CD8-positive, alpha-beta T cell (primary cell): ENCODE measurements at regions of chr18 and their contacts with region 1.

Region 1: GRCh38 chr18:45212181-45213039 is 402.9 kb upstream of the SLC14A2 start:
- DNase-seq: peak; percentile 34 to 85 (median 68)
- ATAC-seq: peak; percentile 71
- H3K4me3 ChIP-seq: no peak overlapping the region
- H3K4me3 Mint-ChIP-seq: no peak overlapping the region
- H3K27ac ChIP-seq: no peak overlapping the region
- H3K27ac Mint-ChIP-seq: no peak overlapping the region
- H3K4me1 ChIP-seq: no peaks in the 10 kb centered on the region
- H3K4me1 Mint-ChIP-seq: no peaks in the 10 kb centered on the region
- H3K27me3 ChIP-seq: no peaks in the 10 kb centered on the region
- H3K27me3 Mint-ChIP-seq: peaks cover 2% of the 10 kb centered on the region
- CTCF ChIP-seq: peak; percentile 73

Region 2: GRCh38 chr18:43571078-43571689 is 1641.2 kb before region 1 on chr18:
- CTCF ChIA-PET with region 1: no interaction called
- POLR2A ChIA-PET with region 1: no interaction called
- intact Hi-C with region 1: loop called in 1 of 2 experiments (anchors 5 kb)
- DNase-seq: peak in 2 of 9 experiments; percentile 14 to 17
- ATAC-seq: no peak
- H3K4me3 ChIP-seq: no peak overlapping the region
- H3K4me3 Mint-ChIP-seq: no peak overlapping the region
- H3K27ac ChIP-seq: no peak overlapping the region
- H3K27ac Mint-ChIP-seq: no peak overlapping the region
- H3K4me1 ChIP-seq: no peaks in the 10 kb centered on the region
- H3K4me1 Mint-ChIP-seq: no peaks in the 10 kb centered on the region
- H3K27me3 ChIP-seq: no peaks in the 10 kb centered on the region
- H3K27me3 Mint-ChIP-seq: no peaks in the 10 kb centered on the region
- CTCF ChIP-seq: peak; percentile 27

Region 3: DNA sequence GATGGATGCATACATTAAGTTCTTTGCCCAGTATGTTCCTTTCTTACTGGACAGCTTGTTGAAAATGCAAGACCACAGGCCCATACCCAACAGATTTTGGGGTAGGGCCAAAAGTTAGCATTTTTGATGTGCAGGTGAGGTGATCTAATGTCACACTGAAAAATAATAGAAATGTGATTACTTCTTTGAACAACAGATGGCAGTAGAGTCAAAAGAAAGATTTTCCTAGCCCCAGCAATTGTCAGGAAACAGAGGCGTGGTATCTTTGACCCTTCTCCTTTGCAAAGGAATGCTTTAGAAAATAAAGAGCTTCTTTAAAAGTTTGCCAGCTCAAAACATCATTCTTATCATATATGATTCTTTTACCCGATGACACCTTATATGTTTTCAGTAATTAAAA is 1591.5 kb before region 1 on chr18:
- CTCF ChIA-PET with region 1: interaction called, 4 read pairs
- POLR2A ChIA-PET with region 1: no interaction called
- intact Hi-C with region 1: loop called (anchors 2 kb)
- DNase-seq: peak in 2 of 9 experiments; percentile 4 to 14
- ATAC-seq: no peak
- H3K4me3 ChIP-seq: no peak overlapping the region
- H3K4me3 Mint-ChIP-seq: no peak overlapping the region
- H3K27ac ChIP-seq: no peak overlapping the region
- H3K27ac Mint-ChIP-seq: no peak overlapping the region
- H3K4me1 ChIP-seq: no peaks in the 10 kb centered on the region
- H3K4me1 Mint-ChIP-seq: no peaks in the 10 kb centered on the region
- H3K27me3 ChIP-seq: no peaks in the 10 kb centered on the region
- H3K27me3 Mint-ChIP-seq: no peaks in the 10 kb centered on the region
- CTCF ChIP-seq: peak; percentile 29

Region 4: DNA sequence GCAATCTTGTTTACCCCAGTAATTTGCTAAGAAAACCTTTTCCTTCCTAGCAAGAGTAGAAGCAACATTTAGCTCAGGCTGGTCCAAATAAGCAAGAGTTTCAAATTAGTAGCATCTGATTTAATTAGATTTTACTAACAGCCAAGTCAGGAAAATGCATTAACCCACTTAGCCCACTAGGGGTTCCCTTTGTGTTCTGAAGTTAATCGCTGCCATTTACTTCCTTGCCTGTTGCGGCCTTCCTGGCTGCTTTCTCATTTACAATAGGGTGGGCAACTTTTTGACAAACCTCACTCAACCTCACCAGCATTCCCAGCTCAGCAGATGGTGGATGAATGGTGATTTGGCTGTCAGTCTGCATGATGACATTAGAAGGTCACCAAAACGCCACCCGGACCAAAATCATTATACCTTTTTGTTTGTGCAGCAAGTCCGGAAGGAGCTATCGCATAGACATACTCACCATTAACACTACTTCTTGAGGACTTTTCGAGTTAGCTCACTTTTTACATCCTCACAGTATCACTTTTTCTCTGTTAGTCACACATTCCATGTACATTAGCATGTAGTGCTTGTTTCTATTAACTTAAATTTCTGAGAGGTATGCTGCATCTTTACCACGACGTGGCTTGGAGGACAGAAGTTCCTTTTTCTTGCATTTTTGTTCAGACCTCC is 633.2 kb before region 1 on chr18:
- CTCF ChIA-PET with region 1: no interaction called
- POLR2A ChIA-PET with region 1: no interaction called
- intact Hi-C with region 1: loop called in 1 of 2 experiments (anchors 10 kb)
- DNase-seq: peak in 2 of 9 experiments; percentile 15 to 34
- ATAC-seq: no peak
- H3K4me3 ChIP-seq: no peak overlapping the region
- H3K4me3 Mint-ChIP-seq: no peak overlapping the region
- H3K27ac ChIP-seq: no peak overlapping the region
- H3K27ac Mint-ChIP-seq: no peak overlapping the region
- H3K4me1 ChIP-seq: no peaks in the 10 kb centered on the region
- H3K4me1 Mint-ChIP-seq: peaks cover 11% of the 10 kb centered on the region
- H3K27me3 ChIP-seq: no peaks in the 10 kb centered on the region
- H3K27me3 Mint-ChIP-seq: no peaks in the 10 kb centered on the region
- CTCF ChIP-seq: peak; percentile 19

Region 5: GRCh38 chr18:44679056-44679905 is 533.1 kb before region 1 on chr18:
- CTCF ChIA-PET with region 1: no interaction called
- POLR2A ChIA-PET with region 1: no interaction called
- intact Hi-C with region 1: loop called in 1 of 2 experiments (anchors 2 kb)
- DNase-seq: peak; percentile 18 to 88 (median 65)
- ATAC-seq: peak; percentile 88
- H3K4me3 ChIP-seq: peak overlapping the region; percentile 54 to 67
- H3K4me3 Mint-ChIP-seq: peak overlapping the region; percentile 85
- H3K27ac ChIP-seq: peak overlapping the region; percentile 44 to 67
- H3K27ac Mint-ChIP-seq: no peak overlapping the region
- H3K4me1 ChIP-seq: peaks cover 4% of the 10 kb centered on the region
- H3K4me1 Mint-ChIP-seq: peaks cover 7% of the 10 kb centered on the region
- H3K27me3 ChIP-seq: no peaks in the 10 kb centered on the region
- H3K27me3 Mint-ChIP-seq: peaks cover 15% of the 10 kb centered on the region
- CTCF ChIP-seq: peak; percentile 50

Region 6: GRCh38 chr18:44803019-44803650 is 409.3 kb before region 1 on chr18:
- CTCF ChIA-PET with region 1: no interaction called
- POLR2A ChIA-PET with region 1: no interaction called
- intact Hi-C with region 1: loop called in 1 of 2 experiments (anchors 10 kb)
- DNase-seq: no peak
- ATAC-seq: no peak
- H3K4me3 ChIP-seq: no peak overlapping the region
- H3K4me3 Mint-ChIP-seq: no peak overlapping the region
- H3K27ac ChIP-seq: no peak overlapping the region
- H3K27ac Mint-ChIP-seq: no peak overlapping the region
- H3K4me1 ChIP-seq: peaks cover 6% of the 10 kb centered on the region
- H3K4me1 Mint-ChIP-seq: peaks cover 8% of the 10 kb centered on the region
- H3K27me3 ChIP-seq: no peaks in the 10 kb centered on the region
- H3K27me3 Mint-ChIP-seq: no peaks in the 10 kb centered on the region
- CTCF ChIP-seq: no peak

Region 7: GRCh38 chr18:45191795-45192194 is 20.6 kb before region 1 on chr18:
- CTCF ChIA-PET with region 1: no interaction called
- POLR2A ChIA-PET with region 1: no interaction called
- intact Hi-C with region 1: no loop called
- DNase-seq: no peak
- ATAC-seq: no peak
- H3K4me3 ChIP-seq: no peak overlapping the region
- H3K4me3 Mint-ChIP-seq: no peak overlapping the region
- H3K27ac ChIP-seq: no peak overlapping the region
- H3K27ac Mint-ChIP-seq: no peak overlapping the region
- H3K4me1 ChIP-seq: no peaks in the 10 kb centered on the region
- H3K4me1 Mint-ChIP-seq: no peaks in the 10 kb centered on the region
- H3K27me3 ChIP-seq: no peaks in the 10 kb centered on the region
- H3K27me3 Mint-ChIP-seq: no peaks in the 10 kb centered on the region
- CTCF ChIP-seq: no peak

Region 8: GRCh38 chr18:45228796-45229388 is 16.5 kb after region 1 on chr18:
- CTCF ChIA-PET with region 1: no interaction called
- POLR2A ChIA-PET with region 1: no interaction called
- intact Hi-C with region 1: no loop called
- DNase-seq: no peak
- ATAC-seq: no peak
- H3K4me3 ChIP-seq: no peak overlapping the region
- H3K4me3 Mint-ChIP-seq: no peak overlapping the region
- H3K27ac ChIP-seq: no peak overlapping the region
- H3K27ac Mint-ChIP-seq: no peak overlapping the region
- H3K4me1 ChIP-seq: no peaks in the 10 kb centered on the region
- H3K4me1 Mint-ChIP-seq: no peaks in the 10 kb centered on the region
- H3K27me3 ChIP-seq: no peaks in the 10 kb centered on the region
- H3K27me3 Mint-ChIP-seq: no peaks in the 10 kb centered on the region
- CTCF ChIP-seq: no peak